ENCODE measurements at regions of chr13 and their contacts with region 1.

Region 1: DNA sequence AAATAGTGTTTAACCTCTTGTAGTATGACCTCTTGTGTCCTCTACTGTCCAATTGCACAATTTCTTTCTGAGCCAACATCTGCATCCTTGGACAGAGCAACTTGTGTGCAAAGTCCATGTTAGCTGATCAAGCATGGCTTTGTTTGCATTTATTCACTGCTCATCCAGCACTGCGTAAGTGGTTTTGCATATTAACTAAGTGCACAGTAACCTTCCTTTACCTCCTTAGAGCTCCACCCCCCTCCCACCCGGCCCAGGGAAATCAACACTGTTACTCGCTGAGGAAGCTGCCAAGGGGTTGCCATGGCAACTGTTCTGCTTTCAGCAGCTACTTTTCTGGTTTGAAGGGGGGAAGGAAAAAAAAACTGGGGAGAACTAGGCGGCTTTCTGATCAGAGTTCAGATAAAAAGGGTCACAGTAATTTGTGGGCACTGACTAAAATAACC is 153.5 kb upstream of the KLF12 start:
- DNase-seq: peak; percentile 88
- H3K4me3 ChIP-seq: peak overlapping the region; percentile 55
- H3K27ac ChIP-seq: no peak overlapping the region
- H3K4me1 ChIP-seq: peaks cover 51% of the 10 kb centered on the region
- CTCF ChIP-seq: no peak

Region 2: GRCh38 chr13:73754727-73755292 is 532.9 kb before region 1 on chr13:
- CTCF ChIA-PET with region 1: interaction called, 15 read pairs
- POLR2A ChIA-PET with region 1: interaction called, 3 read pairs
- intact Hi-C with region 1: loop called (anchors 1 kb)
- DNase-seq: peak; percentile 66
- H3K4me3 ChIP-seq: no peak overlapping the region
- H3K27ac ChIP-seq: no peak overlapping the region
- H3K4me1 ChIP-seq: no peaks in the 10 kb centered on the region
- CTCF ChIP-seq: peak; percentile 89

Region 3: GRCh38 chr13:73835138-73835721 is 452.5 kb before region 1 on chr13:
- CTCF ChIA-PET with region 1: interaction called, 3 read pairs
- POLR2A ChIA-PET with region 1: interaction called, 6 read pairs
- intact Hi-C with region 1: loop called (anchors 1 kb)
- DNase-seq: peak; percentile 73
- H3K4me3 ChIP-seq: no peak overlapping the region
- H3K27ac ChIP-seq: no peak overlapping the region
- H3K4me1 ChIP-seq: peaks cover 14% of the 10 kb centered on the region
- CTCF ChIP-seq: peak; percentile 88

Region 4: GRCh38 chr13:73967397-73968165 is 320.2 kb before region 1 on chr13:
- CTCF ChIA-PET with region 1: interaction called, 3 read pairs
- POLR2A ChIA-PET with region 1: interaction called, 5 read pairs
- intact Hi-C with region 1: loop called (anchors 5 kb)
- DNase-seq: peak; percentile 91
- H3K4me3 ChIP-seq: peak overlapping the region; percentile 61
- H3K27ac ChIP-seq: peak overlapping the region; percentile 99
- H3K4me1 ChIP-seq: peaks cover 76% of the 10 kb centered on the region
- CTCF ChIP-seq: no peak

Region 5: GRCh38 chr13:74026753-74027152 is 261.0 kb before region 1 on chr13:
- CTCF ChIA-PET with region 1: no interaction called
- POLR2A ChIA-PET with region 1: interaction called, 4 read pairs
- intact Hi-C with region 1: loop called (anchors 10 kb)
- DNase-seq: peak; percentile 82
- H3K4me3 ChIP-seq: peak overlapping the region; percentile 56
- H3K27ac ChIP-seq: peak overlapping the region; percentile 83
- H3K4me1 ChIP-seq: peaks cover 48% of the 10 kb centered on the region
- CTCF ChIP-seq: no peak

Region 6: DNA sequence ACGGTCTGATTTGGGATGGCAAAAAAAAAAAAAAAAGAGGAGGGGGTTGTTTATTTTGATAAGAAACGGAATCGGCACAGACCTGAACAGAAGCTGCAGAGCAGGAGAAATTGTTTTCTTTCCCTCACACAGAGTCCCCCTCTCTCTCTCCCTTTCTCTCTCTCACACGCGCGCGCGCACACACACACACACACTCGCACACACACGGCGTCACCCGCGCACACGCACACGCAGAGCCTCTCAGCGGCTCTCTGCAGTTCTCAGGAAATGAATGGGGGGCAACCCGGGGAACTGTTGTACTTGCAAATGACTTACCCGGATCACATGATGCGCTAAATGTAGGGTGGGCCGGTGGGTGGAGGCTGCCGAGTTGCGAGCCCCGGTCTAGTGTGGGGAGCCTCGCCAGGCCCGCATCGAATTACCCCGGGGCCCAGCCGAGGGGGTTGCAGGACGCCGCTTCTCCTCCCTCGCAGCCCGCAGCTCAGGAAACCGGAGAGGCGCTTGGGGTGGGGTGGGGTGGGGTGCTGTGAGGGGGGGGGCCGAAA is 154.0 kb before region 1 on chr13:
- CTCF ChIA-PET with region 1: interaction called, 3 read pairs
- POLR2A ChIA-PET with region 1: interaction called, 15 read pairs
- intact Hi-C with region 1: loop called (anchors 1 kb)
- DNase-seq: peak; percentile 95
- H3K4me3 ChIP-seq: peak overlapping the region; percentile 86
- H3K27ac ChIP-seq: peak overlapping the region; percentile 90
- H3K4me1 ChIP-seq: peaks cover 38% of the 10 kb centered on the region
- CTCF ChIP-seq: 0 out of 2 replicates have a peak, but pooled peaks have one; percentile 14

Region 7: GRCh38 chr13:75685239-75685697 is 1397.5 kb after region 1 on chr13:
- CTCF ChIA-PET with region 1: no interaction called
- POLR2A ChIA-PET with region 1: interaction called, 10 read pairs
- intact Hi-C with region 1: no loop called
- DNase-seq: no peak
- H3K4me3 ChIP-seq: no peak overlapping the region
- H3K27ac ChIP-seq: no peak overlapping the region
- H3K4me1 ChIP-seq: no peaks in the 10 kb centered on the region
- CTCF ChIP-seq: no peak